ENCODE measurements at regions of chr22 and their contacts with region 1.

Region 1: DNA sequence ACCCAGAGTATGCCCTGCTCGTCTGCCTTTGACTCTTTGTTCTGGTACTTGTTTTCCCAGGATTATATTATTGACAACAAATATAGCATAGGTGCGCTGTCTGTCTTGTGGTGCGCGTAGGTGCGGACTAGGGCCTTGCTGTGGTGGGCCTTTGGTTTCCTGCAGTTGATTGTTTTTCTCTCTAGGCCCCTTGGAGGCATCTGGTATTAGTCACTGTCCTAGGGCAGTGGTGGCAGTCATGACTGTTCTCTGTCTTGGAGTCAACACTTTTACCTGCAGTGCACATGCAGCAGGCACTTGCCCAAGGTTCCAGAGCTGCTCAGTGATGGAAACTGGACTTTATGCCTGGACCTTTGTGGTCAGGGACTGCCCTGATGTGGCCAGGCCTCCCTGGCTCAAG is 18.6 kb downstream of the PPP6R2 start:
- DNase-seq: no peak
- H3K4me3 ChIP-seq: no peak overlapping the region
- CTCF ChIP-seq: no peak

Region 2: DNA sequence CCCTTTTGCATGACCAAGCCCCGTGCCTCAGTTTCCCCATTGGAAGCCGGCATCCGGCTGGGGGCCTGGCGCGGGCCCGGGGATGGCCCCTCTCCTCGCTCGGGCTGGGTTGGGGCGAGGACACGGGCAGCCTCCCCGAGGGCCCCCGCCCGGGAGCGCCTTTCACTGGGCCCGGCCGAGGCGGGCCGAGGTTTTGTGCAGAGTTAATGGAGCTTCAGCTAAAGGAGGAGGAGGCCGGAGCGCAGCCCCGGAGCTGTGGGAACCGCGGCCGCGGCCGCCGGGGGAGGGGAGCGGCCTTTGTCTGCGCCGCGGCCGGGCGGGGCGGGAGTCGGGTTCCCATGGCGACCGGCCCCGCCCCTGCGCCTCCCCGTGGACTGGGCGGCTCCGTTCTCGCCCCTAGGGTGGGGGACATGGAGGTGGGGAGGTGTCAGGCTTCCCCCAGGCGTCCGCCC is 90.1 kb before region 1 on chr22:
- CTCF ChIA-PET with region 1: no interaction called
- POLR2A ChIA-PET with region 1: no interaction called
- DNase-seq: no peak
- H3K4me3 ChIP-seq: peak overlapping the region; percentile 58
- CTCF ChIP-seq: peak; percentile 49

Region 3: DNA sequence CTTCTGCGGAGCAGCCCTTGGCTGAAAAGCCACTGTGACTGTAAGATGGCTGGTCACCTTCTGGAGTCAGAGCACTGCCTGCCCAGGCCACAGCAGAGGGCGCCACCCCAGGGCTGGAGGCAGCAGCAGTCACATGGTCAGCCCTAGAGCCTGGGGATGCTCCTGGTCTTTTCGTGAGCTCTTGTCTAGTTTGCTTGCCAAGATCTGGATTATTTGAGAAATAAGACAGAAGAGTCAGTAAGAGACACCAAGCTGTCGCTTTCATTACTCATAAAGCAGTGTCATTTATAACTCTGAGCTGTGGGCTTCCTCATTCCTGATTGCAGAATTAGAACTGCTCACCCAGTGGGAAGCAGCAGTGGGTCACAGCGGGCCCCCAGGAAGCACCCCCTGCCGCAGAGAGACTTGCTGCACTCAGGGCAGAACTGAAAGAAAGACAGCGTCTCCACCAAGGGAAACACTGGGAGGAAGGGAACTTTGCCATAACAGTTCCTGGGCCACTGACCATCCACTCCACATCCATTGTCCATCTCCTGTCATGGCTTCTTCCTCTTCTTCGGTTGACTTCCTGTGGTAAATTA is 38.2 kb after region 1 on chr22:
- CTCF ChIA-PET with region 1: interaction called, 10 read pairs
- POLR2A ChIA-PET with region 1: interaction called, 3 read pairs
- DNase-seq: no peak
- H3K4me3 ChIP-seq: no peak overlapping the region
- CTCF ChIP-seq: peak; percentile 55

Measured in AG04449 (cell line).